ENCODE measurements at regions of chr6 and their contacts with region 1.

Region 1: DNA sequence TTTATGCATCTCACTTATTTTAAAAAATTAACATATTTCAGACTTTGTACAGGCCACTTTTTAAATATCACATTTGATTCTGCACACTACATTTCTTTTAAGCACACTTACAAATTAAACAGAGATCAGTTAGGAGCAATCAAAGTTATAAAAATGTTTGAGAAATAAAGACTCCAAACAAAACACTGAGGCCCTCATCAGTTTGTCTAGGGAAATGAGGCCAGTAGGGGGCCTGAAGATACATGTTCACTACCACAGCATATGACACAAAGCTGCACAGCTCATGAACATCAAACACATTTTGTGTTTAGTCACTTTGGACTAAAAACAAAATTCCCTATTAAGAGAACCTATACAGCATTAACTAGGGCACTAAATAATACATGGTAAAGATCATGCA is 180.5 kb downstream of the PDE7B start:
- DNase-seq: no peak
- ATAC-seq: peak; percentile 72

Region 2: DNA sequence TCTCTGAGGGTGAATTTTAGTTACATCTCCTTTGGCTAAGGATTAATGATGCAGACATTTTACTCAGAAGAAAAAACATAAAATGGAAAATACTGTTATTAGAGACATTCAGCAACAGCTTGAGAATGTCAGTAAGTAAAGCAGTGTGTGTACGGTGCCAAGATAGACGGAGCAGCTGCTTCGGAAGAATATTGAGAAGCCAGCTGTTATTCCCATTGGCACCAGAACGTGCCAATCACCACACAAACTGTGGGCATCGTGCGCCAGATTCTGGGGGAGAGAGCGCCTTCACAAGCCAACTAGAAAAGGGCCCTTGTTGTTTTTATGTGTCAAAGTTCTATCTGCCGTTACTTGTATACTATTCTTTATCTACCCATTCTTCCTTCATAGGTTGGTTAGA is 54.7 kb after region 1 on chr6:
- intact Hi-C with region 1: no loop called
- DNase-seq: no peak
- ATAC-seq: peak; percentile 34

Region 3: GRCh38 chr6:136113736-136114173 is 81.8 kb after region 1 on chr6:
- intact Hi-C with region 1: loop called (anchors 10 kb)
- DNase-seq: peak; percentile 47
- ATAC-seq: peak; percentile 94

Region 4: DNA sequence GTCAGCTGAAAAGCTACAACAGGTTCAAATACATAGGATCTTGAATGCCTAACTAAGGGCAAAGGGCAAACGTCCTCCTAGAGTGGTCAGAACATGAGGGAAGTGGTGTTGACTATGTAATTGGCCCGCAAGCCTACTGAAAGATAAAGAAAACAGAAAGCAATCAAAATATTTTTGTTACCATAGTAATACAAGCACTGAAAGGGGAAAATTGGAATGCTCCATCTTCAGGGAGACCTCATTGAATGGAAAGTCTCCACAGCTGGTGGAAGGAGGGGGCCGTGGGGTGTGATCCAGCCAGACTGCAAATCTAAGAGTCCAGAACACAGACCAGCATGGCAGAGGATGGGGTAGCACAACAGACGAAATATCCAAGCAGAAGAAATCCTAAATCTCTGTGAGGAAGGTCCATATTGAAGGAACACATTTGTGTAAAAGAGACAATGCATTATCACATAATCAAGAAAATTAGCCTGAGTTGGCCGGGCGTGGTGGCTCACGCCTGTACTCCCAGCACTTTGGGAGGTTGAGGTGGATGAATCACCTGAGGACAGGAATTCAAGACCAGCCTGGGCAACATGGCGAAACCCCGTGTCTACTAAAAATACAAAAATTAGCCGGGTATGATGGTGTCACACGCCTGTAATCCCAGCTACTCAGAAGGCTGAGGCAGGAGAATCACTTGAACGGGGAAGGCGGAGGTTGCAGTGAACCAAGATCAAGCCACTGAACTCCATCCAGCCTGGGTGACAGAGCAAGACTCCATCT is 178.6 kb after region 1 on chr6:
- intact Hi-C with region 1: no loop called
- DNase-seq: no peak
- ATAC-seq: no peak

Region 5: GRCh38 chr6:136226027-136226673 is 194.2 kb after region 1 on chr6:
- intact Hi-C with region 1: loop called (anchors 5 kb)
- DNase-seq: peak; percentile 65
- ATAC-seq: peak; percentile 94